IMR-90 (cell line): ENCODE measurements at regions of chr10 and their contacts with region 1.

Region 1: DNA sequence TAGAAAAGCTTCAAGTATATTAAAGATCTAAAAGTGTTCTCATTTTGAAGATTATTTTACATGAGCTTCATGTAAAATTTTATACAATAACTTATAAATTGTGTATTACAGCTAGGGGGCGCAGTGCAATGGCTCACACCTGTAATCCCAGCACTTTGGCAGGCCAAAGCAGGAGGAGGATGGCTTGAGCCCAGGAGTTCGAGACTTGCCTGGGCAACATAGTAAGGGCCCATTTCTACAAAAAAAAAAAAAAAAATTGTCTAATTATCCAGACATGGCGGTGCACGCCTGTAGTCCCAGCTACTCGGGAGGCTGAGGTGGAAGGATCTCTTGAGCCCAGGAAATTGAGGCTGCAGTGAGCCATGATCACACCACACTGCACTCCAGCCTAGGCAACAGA is 16.6 kb downstream of the ACBD5 start:
- DNase-seq: peak; percentile 26
- ATAC-seq: no peak
- H3K4me3 ChIP-seq: no peak overlapping the region
- H3K27ac ChIP-seq: no peak overlapping the region
- H3K4me1 ChIP-seq: no peaks in the 10 kb centered on the region
- H3K27me3 ChIP-seq: no peaks in the 10 kb centered on the region
- CTCF ChIP-seq: peak; percentile 48
- POLR2A ChIP-seq: no peak
- RAD21 ChIP-seq: peak; percentile 31

Region 2: GRCh38 chr10:27748601-27749000 is 524.6 kb after region 1 on chr10:
- CTCF ChIA-PET with region 1: interaction called, 11 read pairs
- POLR2A ChIA-PET with region 1: no interaction called
- dilution Hi-C with region 1: no loop called
- in situ Hi-C with region 1: no loop called
- intact Hi-C with region 1: no loop called
- DNase-seq: no peak
- ATAC-seq: no peak
- H3K4me3 ChIP-seq: no peak overlapping the region
- H3K27ac ChIP-seq: no peak overlapping the region
- H3K4me1 ChIP-seq: peaks cover 3% of the 10 kb centered on the region; the same call in 1 of the 2 replicates
- H3K27me3 ChIP-seq: peaks cover 59% of the 10 kb centered on the region
- CTCF ChIP-seq: no peak
- POLR2A ChIP-seq: no peak
- RAD21 ChIP-seq: no peak

Region 3: DNA sequence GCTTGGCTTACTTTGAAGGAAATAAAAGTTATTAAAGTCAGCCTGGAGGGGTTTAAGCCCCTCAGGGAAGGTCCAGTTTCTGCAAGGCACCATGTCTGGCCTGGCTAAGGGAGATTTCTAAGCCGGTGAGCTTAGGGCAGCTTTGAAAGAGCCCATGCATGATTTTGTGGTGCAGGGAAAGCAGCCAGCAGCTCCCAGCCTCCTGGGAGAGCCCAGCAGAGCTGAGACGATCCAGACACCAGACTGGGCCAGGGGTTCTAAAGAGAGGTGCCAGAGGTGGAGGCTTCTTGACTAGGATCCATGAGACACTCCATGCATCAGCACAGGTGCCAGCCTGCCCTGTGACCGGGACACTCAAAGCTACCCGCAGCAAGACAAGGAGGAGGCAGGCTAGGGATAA is 581.2 kb after region 1 on chr10:
- CTCF ChIA-PET with region 1: no interaction called
- POLR2A ChIA-PET with region 1: no interaction called
- dilution Hi-C with region 1: no loop called
- in situ Hi-C with region 1: no loop called
- intact Hi-C with region 1: no loop called
- DNase-seq: no peak
- ATAC-seq: no peak
- H3K4me3 ChIP-seq: no peak overlapping the region
- H3K27ac ChIP-seq: no peak overlapping the region
- H3K4me1 ChIP-seq: no peaks in the 10 kb centered on the region
- H3K27me3 ChIP-seq: peaks cover 12% of the 10 kb centered on the region
- CTCF ChIP-seq: no peak
- POLR2A ChIP-seq: no peak
- RAD21 ChIP-seq: no peak